ENCODE measurements at regions of chr6 and their contacts with region 1.

Region 1: GRCh38 chr6:99868074-99868702 is 125.8 kb downstream of the MCHR2 start:
- DNase-seq: peak; percentile 29 to 46
- ATAC-seq: peak; percentile 66 to 69
- H3K4me3 ChIP-seq: no peak overlapping the region
- H3K27ac ChIP-seq: no peak overlapping the region
- H3K4me1 ChIP-seq: no peaks in the 10 kb centered on the region
- H3K27me3 ChIP-seq: no peaks in the 10 kb centered on the region
- CTCF ChIP-seq: peak; percentile 53 to 80 (median 60)
- POLR2A ChIP-seq: no peak

Region 2: DNA sequence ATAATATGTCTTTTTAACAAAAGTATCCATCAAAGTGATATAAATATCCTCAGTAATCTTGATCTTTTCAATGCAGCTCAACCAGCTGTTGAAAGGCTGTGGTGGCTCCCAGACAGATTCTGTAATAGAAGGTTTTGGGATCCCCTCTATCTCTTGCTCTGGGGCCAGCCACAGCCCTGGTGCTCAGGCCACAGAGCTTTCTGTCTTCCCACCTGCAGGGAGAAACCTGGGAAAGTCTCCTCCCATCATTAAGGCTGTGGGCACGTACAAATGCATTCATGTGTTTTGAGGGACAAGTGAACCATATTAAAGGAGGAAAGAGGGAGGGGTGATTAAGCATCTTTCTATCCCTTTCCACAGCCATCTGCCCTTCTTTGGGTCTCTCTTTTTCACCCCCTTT is 78.4 kb before region 1 on chr6:
- in situ Hi-C with region 1: no loop called
- intact Hi-C with region 1: no loop called
- DNase-seq: no peak
- ATAC-seq: no peak
- H3K4me3 ChIP-seq: no peak overlapping the region
- H3K27ac ChIP-seq: no peak overlapping the region
- H3K4me1 ChIP-seq: no peaks in the 10 kb centered on the region
- H3K27me3 ChIP-seq: no peaks in the 10 kb centered on the region
- CTCF ChIP-seq: no peak
- POLR2A ChIP-seq: no peak

Region 3: DNA sequence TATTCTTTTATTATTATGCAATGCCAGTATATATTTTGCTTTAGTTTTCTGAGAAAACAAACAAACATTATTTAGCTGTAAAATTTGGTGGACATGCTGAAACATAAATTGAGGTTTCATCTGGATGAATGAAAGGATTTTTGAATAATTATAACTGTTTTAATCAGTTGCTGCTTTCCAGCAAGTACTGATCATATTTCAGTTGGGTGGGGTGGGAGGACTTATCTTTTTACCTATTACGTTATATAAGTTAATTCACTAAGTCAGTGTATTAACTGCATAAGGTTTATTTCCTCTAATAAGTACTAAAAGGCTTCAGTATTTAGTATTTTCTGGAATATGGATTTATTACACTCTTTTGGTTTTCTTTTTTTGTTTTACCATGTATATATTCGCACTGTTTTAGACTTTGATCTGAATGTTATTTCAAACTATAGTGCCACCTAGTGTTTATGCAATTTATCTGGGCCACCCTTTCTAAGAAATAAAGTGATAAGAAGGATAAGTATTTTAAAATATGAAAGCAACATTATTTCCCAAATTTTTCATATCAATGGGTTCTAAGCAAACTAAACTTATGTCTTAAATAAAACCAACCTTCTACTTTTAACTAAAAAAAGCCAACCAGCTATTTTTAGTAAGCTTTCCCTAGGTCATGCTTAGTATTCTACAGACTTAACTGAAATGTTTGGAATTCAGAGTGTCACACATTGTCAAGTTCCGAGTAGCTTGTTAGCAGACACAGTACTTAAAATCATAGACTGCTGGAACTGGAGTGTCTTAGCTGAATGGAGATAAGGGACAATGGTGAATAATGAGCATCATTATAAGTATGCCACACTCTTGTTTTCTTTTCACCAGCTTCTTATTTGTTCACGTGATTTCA is 231.2 kb after region 1 on chr6:
- in situ Hi-C with region 1: loop called in 2 of 4 experiments (anchors 10 kb)
- intact Hi-C with region 1: loop called (anchors 1 kb)
- DNase-seq: no peak
- ATAC-seq: peak; percentile 66 to 75
- H3K4me3 ChIP-seq: no peak overlapping the region
- H3K27ac ChIP-seq: no peak overlapping the region
- H3K4me1 ChIP-seq: no peaks in the 10 kb centered on the region
- H3K27me3 ChIP-seq: no peaks in the 10 kb centered on the region
- CTCF ChIP-seq: peak; percentile 50 to 70 (median 55)
- POLR2A ChIP-seq: no peak

Region 4: GRCh38 chr6:100479179-100480035 is 611.2 kb after region 1 on chr6:
- in situ Hi-C with region 1: loop called in 1 of 4 experiments (anchors 25 kb)
- intact Hi-C with region 1: no loop called
- DNase-seq: no peak
- ATAC-seq: no peak
- H3K4me3 ChIP-seq: no peak overlapping the region
- H3K27ac ChIP-seq: no peak overlapping the region
- H3K4me1 ChIP-seq: no peaks in the 10 kb centered on the region
- H3K27me3 ChIP-seq: peaks cover 0 to 3% (median 0%) of the 10 kb centered on the region in 3 donors
- CTCF ChIP-seq: peak; percentile 30 to 65 (median 60)
- POLR2A ChIP-seq: no peak

Region 5: DNA sequence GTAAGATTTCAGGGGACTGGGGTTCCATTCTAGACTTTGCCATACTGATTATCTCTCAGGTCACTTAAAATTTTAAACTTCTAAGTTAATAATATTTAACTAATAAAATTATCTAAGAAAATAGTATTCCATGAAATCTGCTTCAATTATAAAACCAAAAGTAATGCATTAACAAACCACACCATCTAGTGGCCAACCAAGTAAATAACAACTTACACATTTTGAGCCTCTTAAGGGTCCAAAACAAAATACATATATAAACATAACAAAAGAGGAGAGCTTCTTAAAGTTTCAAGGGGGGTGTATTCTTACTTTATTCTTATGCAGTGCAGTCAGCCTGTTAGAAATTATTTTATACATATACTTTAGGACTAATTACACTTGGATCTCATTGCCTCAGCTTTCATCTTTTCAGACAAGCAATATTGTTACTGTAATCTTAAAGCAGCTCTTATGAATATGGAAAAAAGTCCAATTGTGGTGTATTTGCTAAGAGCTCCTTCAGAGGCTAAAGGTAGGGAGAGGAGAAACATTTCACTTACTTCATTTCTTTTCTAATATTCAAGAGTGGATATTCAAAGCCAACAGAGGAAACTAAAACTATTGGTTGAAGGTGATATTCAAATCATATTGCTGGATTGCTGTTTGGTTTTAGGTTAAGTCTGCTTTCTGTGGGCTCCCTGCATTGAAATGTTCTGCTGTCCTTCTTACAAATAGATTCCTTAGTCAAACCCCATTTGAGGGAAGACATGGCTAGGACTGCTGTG is 796.3 kb after region 1 on chr6:
- in situ Hi-C with region 1: loop called in 3 of 4 experiments (anchors 25 kb)
- intact Hi-C with region 1: loop called (anchors 5 kb)
- DNase-seq: no peak
- ATAC-seq: no peak
- H3K4me3 ChIP-seq: no peak overlapping the region
- H3K27ac ChIP-seq: no peak overlapping the region
- H3K4me1 ChIP-seq: no peaks in the 10 kb centered on the region
- H3K27me3 ChIP-seq: no peaks in the 10 kb centered on the region
- CTCF ChIP-seq: peak in 4 of 5 experiments; percentile 35 to 66 (median 50)
- POLR2A ChIP-seq: no peak

Measured in gastrocnemius medialis (tissue), 4 donors.